CD8-positive, alpha-beta T cell (primary cell): ENCODE measurements at regions of chr15 and their contacts with region 1.

Region 1: DNA sequence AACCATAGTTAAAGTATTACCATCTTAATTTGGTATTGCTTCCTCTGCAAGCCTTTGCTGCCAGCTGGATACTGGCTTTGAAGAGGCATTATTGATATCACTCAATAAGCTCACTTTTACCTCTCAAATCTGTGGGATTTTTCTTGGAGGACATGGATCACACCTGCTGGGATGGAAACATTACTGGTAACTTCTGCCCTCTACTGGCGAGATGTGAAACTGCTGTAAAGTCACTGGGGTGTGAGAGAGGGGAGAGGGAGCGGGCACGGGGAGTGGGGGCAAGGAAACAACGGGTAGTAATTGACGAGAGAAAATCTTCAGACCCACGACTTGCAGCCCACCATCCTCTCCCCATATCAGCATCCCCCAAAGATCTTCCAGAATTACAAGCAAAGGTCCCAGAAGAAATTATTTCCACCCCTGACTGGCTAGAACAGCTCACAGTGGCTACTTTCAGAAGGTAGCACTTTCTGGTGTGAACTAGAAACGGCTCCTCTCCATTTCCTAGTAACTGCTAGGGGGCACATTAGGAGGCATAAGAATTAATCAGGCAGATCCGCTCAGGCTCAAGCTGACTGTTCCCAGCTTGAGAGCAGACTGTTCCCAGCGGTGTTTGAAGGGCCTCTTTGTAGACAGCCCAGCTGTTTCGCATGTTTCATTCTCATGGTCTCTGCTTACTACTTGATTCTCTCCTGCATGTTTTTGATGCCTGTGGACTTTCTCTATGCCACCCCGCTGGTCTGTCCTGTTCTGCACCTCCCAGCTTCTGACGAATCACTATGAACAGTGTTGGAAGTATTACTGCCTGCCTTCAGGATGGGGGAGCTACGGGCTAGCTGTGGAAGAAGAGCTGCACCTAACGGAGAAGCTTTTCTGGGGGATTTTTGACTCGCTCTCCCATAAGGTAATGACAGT is 230.4 kb upstream of the CHRM5 start:
- DNase-seq: peak in 5 of 9 experiments; percentile 17 to 50 (median 26)
- ATAC-seq: no peak
- H3K4me3 ChIP-seq: no peak overlapping the region
- H3K4me3 Mint-ChIP-seq: no peak overlapping the region
- H3K27ac ChIP-seq: no peak overlapping the region
- H3K27ac Mint-ChIP-seq: no peak overlapping the region
- H3K4me1 ChIP-seq: no peaks in the 10 kb centered on the region
- H3K4me1 Mint-ChIP-seq: peaks cover 4% of the 10 kb centered on the region
- H3K27me3 ChIP-seq: no peaks in the 10 kb centered on the region
- H3K27me3 Mint-ChIP-seq: peaks cover 2% of the 10 kb centered on the region
- CTCF ChIP-seq: peak; percentile 79

Region 2: DNA sequence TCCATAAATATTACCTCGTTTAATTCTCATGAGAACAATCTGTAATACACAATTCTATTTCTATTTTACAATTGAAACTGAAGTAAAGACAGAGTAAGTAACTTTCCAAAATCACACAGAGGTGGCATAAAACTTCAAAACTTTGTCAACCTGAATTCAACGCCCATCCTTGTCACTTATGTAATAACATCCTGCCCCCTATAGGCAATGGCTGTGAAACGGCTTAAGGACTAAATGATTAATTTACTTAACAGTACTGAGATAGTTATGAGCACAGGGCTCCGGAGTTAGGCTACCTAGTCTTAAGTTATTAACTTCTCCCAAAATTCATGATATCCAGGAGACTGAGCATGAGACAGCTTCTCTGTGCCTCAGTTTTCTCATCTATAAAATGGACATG is 62.7 kb before region 1 on chr15:
- CTCF ChIA-PET with region 1: no interaction called
- POLR2A ChIA-PET with region 1: no interaction called
- intact Hi-C with region 1: loop called in 1 of 2 experiments (anchors 10 kb)
- DNase-seq: peak in 1 of 9 experiments; percentile 4
- ATAC-seq: no peak
- H3K4me3 ChIP-seq: no peak overlapping the region
- H3K4me3 Mint-ChIP-seq: no peak overlapping the region
- H3K27ac ChIP-seq: no peak overlapping the region
- H3K27ac Mint-ChIP-seq: no peak overlapping the region
- H3K4me1 ChIP-seq: no peaks in the 10 kb centered on the region
- H3K4me1 Mint-ChIP-seq: no peaks in the 10 kb centered on the region
- H3K27me3 ChIP-seq: no peaks in the 10 kb centered on the region
- H3K27me3 Mint-ChIP-seq: peaks cover 17% of the 10 kb centered on the region
- CTCF ChIP-seq: no peak

Region 3: GRCh38 chr15:33722005-33722672 is 15.8 kb before region 1 on chr15:
- CTCF ChIA-PET with region 1: interaction called, 16 read pairs
- POLR2A ChIA-PET with region 1: no interaction called
- intact Hi-C with region 1: no loop called
- DNase-seq: peak in 1 of 9 experiments; percentile 12
- ATAC-seq: no peak
- H3K4me3 ChIP-seq: no peak overlapping the region
- H3K4me3 Mint-ChIP-seq: no peak overlapping the region
- H3K27ac ChIP-seq: no peak overlapping the region
- H3K27ac Mint-ChIP-seq: no peak overlapping the region
- H3K4me1 ChIP-seq: no peaks in the 10 kb centered on the region
- H3K4me1 Mint-ChIP-seq: no peaks in the 10 kb centered on the region
- H3K27me3 ChIP-seq: no peaks in the 10 kb centered on the region
- H3K27me3 Mint-ChIP-seq: no peaks in the 10 kb centered on the region
- CTCF ChIP-seq: no peak